Brain microvascular endothelial cell (primary cell): ENCODE measurements at regions of chr17 and their contacts with region 1.

Region 1: GRCh38 chr17:27245230-27245696 is 48.7 kb upstream of the WSB1 start:
- DNase-seq: peak; percentile 79
- H3K4me3 ChIP-seq: peak overlapping the region; percentile 26
- H3K27ac ChIP-seq: peak overlapping the region; percentile 95
- H3K27me3 ChIP-seq: no peaks in the 10 kb centered on the region
- CTCF ChIP-seq: peak; percentile 80

Region 2: GRCh38 chr17:27155866-27156265 is 89.4 kb before region 1 on chr17:
- in situ Hi-C with region 1: no loop called
- DNase-seq: no peak
- H3K4me3 ChIP-seq: no peak overlapping the region
- H3K27ac ChIP-seq: no peak overlapping the region
- H3K27me3 ChIP-seq: no peaks in the 10 kb centered on the region
- CTCF ChIP-seq: no peak

Region 3: DNA sequence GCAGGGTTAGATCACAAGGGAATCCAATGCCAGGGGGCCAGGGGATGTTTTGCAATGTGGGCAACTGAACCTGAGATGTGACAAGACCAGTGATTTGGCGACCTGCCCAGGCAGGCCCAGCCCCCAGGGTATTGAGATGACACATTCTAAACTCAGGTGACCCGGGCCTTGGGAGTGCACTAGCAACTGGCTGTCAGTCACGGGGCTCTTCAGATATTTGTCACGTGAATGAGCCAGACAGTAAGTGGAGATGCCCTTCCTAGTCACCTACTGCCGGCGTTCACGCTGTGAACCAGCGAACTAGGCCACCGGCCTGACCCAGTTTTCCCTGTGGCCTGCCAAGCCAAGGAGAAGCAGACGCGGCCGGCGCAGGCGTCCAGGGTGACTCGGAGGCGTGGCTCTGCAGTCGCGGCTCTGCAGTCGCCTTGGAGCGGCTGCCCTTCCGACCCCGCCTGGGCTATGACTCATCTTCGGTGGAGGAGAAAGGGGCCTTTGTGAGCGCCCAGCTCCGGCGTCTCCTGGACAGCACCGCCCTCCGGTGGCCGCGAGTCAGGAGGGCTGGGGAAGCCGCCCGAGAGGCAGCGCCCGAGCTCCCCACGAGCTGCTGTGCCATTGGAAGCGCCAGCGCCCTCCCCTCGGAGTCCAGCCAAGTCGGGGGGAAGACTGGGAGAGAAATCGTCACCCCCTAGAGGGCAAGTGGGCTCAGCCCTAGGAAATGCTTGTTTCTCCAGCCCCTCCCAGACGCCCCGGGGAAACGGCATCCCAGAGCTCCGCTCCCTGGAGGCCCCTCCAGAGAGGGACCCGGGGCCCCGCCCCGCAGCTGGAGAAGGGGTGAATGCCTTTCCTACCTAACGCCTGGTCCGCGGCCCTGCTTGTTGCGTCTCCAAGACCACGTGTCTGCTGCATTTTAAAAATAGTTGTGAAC is 87.5 kb after region 1 on chr17:
- in situ Hi-C with region 1: loop called (anchors 25 kb)
- DNase-seq: peak; percentile 96
- H3K4me3 ChIP-seq: peak overlapping the region; percentile 55
- H3K27ac ChIP-seq: peak overlapping the region; percentile 84
- H3K27me3 ChIP-seq: no peaks in the 10 kb centered on the region
- CTCF ChIP-seq: peak; percentile 87